ENCODE measurements at regions of chr17 and their contacts with region 1.

Region 1: DNA sequence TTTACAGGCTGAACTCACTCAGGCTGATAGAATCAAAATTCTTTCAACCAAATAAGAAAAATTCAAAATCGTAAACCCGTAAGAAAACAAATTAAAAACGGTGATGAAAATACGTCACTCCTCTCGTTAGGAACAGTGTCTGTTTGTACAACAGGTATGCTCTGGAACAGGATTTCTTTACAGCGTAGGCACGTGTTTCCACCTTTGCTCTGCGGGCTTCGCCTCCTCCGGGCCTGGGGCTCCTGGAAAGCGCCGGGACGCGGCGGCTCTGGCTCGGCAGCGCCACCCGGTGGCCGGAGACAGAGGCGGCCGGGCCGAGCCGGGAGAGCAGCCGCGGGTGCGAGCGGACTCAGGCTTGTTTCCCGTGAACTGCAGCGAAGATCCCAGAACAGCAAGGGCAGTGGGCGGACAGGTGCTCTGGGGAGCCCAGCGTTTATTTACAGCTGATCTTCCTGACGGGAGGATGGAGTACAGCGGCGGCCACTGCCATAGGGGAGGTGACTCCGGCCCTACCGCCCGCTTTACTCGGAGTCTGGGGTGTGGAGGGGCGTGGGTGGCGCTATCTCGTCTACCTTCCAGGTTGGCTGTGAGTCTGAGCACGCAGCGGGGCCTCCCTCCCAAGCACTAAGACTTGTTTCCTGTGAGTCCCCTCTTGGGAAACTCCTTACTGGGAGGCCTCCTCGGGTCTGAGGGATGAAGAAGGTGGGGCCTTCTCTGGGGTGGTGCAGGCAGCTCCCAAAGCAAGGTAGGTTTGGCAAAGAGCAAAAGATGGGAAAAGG is 40.5 kb upstream of the ATP2A3 start:
- DNase-seq: peak; percentile 5
- ATAC-seq: peak; percentile 90
- H3K4me3 ChIP-seq: no peak overlapping the region
- H3K27ac ChIP-seq: no peak overlapping the region
- H3K4me1 ChIP-seq: no peaks in the 10 kb centered on the region
- H3K27me3 ChIP-seq: no peaks in the 10 kb centered on the region
- CTCF ChIP-seq: peak; percentile 81 to 85 (median 83)
- EP300 ChIP-seq: no peak
- POLR2A ChIP-seq: 0 out of 2 replicates have a peak, but pooled peaks have one; percentile 34
- RAD21 ChIP-seq: peak; percentile 85

Region 2: GRCh38 chr17:3865176-3865575 is 139.5 kb before region 1 on chr17:
- CTCF ChIA-PET with region 1: interaction called, 4 read pairs
- POLR2A ChIA-PET with region 1: no interaction called
- RAD21 ChIA-PET with region 1: interaction called, 3 read pairs
- SMC1A ChIA-PET with region 1: no interaction called
- in situ Hi-C with region 1: loop called (anchors 5 kb)
- intact Hi-C with region 1: loop called (anchors 1 kb)
- DNase-seq: no peak
- ATAC-seq: no peak
- H3K4me3 ChIP-seq: no peak overlapping the region
- H3K27ac ChIP-seq: no peak overlapping the region
- H3K4me1 ChIP-seq: no peaks in the 10 kb centered on the region
- H3K27me3 ChIP-seq: no peaks in the 10 kb centered on the region
- CTCF ChIP-seq: no peak
- EP300 ChIP-seq: no peak
- POLR2A ChIP-seq: no peak
- RAD21 ChIP-seq: no peak

Region 3: GRCh38 chr17:3965118-3965803 is 39.4 kb before region 1 on chr17:
- CTCF ChIA-PET with region 1: interaction called, 30 read pairs
- POLR2A ChIA-PET with region 1: no interaction called
- RAD21 ChIA-PET with region 1: interaction called, 4 read pairs
- SMC1A ChIA-PET with region 1: interaction called, 7 read pairs
- in situ Hi-C with region 1: no loop called
- intact Hi-C with region 1: loop called (anchors 5 kb)
- DNase-seq: peak; percentile 33
- ATAC-seq: peak; percentile 79
- H3K4me3 ChIP-seq: peak overlapping the region; percentile 90
- H3K27ac ChIP-seq: peak overlapping the region; percentile 62
- H3K4me1 ChIP-seq: peaks cover 44% of the 10 kb centered on the region
- H3K27me3 ChIP-seq: no peaks in the 10 kb centered on the region
- CTCF ChIP-seq: peak in 1 of 3 experiments; percentile 50; a peak in 2 of 6 replicates
- EP300 ChIP-seq: no peak
- POLR2A ChIP-seq: peak; percentile 85
- RAD21 ChIP-seq: no peak

Measured in GM12878 (cell line).